Astrocyte of the cerebellum (primary cell): ENCODE measurements at regions of chr5 and their contacts with region 1.

Region 1: DNA sequence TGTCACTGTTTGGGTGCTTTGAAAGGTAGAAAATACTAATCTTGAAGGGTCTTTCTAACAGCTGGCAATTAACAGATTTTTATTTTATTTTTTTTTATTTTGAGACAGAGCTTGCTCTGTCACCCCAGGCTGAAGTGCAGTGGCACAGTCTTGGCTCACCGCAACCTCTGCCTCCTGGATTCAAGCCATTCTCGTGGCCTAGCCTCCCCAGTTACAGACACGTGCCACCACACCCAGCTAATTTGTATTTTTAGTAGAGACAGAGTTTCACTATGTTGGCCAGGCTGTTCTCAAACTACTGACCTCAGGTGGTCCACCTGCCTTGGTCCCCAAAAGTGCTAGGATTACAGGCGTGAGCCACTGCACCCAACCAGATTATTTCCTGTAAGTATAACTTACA is 12.8 kb upstream of the APC start:
- DNase-seq: no peak
- H3K4me3 ChIP-seq: no peak overlapping the region
- CTCF ChIP-seq: no peak

Region 2: DNA sequence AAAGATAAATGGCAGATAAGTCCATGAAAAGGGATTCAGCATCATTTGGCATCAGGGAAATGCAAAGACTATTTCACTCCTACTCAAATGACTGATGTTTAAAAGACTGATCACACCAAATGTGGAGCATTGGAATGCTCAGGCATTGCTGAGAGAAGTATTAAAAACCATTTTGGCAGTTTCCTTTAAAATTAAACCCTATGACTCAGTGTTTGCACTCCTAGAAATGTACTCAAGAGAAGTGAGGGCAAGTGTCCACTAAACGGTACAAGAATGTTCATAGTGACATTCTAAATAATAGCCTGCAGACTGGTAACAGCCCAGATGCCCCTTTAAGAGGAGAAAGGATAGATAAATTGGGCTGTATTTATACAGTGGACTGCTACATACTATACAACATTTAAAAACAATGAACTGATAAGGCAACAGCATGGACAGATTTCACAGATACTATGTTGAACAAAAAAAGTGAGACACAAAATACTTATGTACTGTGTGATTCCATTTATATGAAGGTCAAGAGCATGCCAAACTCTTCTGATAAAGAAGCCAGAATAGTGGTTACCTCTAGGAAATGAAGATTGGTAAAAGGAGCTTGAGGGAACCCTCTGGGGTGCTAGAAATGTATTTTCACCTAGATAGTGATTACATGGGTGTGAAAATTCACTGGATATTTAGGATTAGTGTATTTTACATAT is 37.4 kb after region 1 on chr5:
- in situ Hi-C with region 1: loop called (anchors 5 kb)
- DNase-seq: no peak
- H3K4me3 ChIP-seq: no peak overlapping the region
- CTCF ChIP-seq: no peak

Region 3: DNA sequence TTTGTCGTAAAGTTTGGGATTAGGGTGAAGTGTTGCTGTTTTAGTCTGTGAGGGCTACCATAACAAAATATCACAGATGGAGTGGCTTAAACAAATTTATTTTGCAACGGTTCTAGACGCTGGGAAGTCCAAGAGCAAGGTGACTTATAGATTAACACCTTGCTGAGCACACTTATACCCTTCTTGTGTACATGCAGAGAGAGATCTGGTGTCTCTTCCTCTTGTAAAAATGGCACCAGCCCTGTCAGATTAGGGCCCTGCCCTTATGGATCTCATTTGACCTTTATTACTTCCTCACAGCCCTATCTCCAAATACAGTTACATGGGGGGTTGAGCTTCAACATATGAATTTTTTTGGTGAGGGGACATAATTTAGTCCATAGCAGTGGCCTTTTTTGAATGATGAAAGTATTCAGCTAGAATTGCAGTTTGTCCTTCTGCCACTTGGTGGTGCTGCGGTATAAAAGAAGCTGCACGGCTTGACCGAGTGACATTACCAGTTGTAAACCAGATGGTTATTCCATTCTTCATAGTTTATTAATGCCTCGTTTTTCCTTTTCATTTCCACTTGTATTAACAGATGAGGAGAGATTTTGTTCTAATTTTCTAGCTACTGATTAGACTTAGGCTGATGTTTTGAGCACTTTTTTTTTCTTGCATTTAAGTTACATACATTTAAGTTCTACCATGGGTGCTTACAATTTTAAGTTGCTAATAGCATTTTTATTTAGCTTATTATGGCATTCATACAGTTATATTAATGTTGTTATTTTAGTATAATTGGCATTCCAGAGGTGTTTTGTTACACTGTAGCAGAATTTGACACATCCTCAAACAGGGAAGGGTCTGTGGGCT is 271.1 kb after region 1 on chr5:
- in situ Hi-C with region 1: no loop called
- DNase-seq: peak; percentile 64
- H3K4me3 ChIP-seq: no peak overlapping the region
- CTCF ChIP-seq: peak; percentile 79

Region 4: DNA sequence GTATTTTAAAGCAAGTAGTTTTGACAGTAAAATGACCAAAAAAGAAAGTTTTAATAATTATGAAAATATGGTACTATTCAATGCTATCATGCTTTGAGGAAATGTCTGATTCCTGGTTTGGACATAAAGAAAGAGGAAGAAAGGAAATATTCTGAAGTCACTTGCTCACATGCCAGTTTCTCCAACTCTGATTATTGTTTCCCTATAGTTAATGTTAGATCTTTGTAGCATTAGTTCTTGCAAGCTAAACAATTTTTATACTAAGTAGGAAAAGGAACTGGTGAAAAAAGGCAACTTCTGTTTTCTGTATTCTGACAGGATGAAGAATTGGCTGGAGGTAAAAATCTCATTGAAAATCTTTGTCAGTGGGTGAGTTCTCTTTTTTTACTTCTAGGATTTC is 908.1 kb after region 1 on chr5:
- in situ Hi-C with region 1: no loop called
- DNase-seq: no peak
- H3K4me3 ChIP-seq: no peak overlapping the region
- CTCF ChIP-seq: no peak

Region 5: DNA sequence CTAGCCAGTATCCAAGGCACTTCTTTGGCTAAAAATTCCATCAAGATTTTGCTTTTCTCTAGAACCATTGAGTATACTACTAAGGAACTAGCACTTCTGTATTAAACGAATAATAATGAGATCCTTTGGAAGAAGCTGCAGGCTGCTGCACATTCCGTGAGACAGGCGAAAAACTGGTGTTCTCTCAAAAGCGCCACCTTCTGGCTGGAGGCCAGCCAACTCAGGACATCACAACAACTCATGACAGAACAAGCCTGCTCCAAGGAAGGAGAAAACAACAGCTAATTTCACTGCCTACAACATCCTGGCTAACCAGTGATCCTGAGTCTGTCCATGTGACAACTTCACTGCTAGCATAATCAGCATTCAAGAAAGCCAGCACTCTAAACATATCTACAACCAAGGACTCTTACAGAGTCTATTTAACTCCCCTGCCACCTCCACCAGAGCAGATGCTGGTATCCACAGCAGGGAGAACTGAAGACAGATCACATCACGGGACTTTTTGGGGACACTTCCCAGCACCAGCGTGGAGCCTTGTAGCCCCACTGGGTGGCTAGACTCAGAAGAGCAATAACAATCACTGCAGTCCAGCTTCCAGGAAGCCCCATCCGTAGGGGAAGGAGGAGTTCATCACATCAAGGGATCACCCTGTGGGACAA is 939.1 kb after region 1 on chr5:
- in situ Hi-C with region 1: no loop called
- DNase-seq: no peak
- H3K4me3 ChIP-seq: no peak overlapping the region
- CTCF ChIP-seq: no peak